SK-N-SH (cell line): ENCODE measurements at regions of chr5 and their contacts with region 1.

Region 1: DNA sequence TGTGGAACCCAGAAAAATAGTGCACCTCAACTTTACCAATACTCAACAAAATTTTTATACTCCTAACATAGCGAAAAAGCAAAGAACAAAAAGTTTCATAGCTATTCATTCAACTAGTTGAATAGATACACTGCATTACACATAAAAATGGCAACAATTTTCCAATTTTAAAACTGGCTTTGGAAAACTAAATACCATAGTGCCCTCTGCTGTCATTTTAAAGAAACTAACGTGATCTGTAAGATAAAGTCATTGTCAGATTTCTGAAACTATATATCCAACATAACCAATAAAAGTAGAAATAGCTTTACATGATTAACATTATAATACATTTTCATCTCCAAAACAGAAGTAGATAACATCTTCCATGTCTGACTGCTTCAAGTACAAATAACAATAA is 31.6 kb downstream of the DTWD2 start:
- DNase-seq: peak; percentile 34
- H3K4me3 ChIP-seq: no peak overlapping the region
- H3K27ac ChIP-seq: no peak overlapping the region
- H3K4me1 ChIP-seq: no peaks in the 10 kb centered on the region; a peak in 1 of 4 replicates
- H3K27me3 ChIP-seq: no peaks in the 10 kb centered on the region
- CTCF ChIP-seq: peak; percentile 66
- EP300 ChIP-seq: no peak
- RAD21 ChIP-seq: peak; percentile 77

Region 2: GRCh38 chr5:118791926-118792734 is 164.6 kb before region 1 on chr5:
- CTCF ChIA-PET with region 1: interaction called, 13 read pairs
- POLR2A ChIA-PET with region 1: no interaction called
- DNase-seq: peak; percentile 46
- H3K4me3 ChIP-seq: peak overlapping the region in 1 of 2 experiments; percentile 47; a peak in 1 of 4 replicates
- H3K27ac ChIP-seq: no peak overlapping the region
- H3K4me1 ChIP-seq: peaks cover 4 to 5% of the 10 kb centered on the region in 2 experiments; a peak in 3 of 4 replicates
- H3K27me3 ChIP-seq: no peaks in the 10 kb centered on the region
- CTCF ChIP-seq: peak; percentile 83
- EP300 ChIP-seq: no peak
- RAD21 ChIP-seq: peak; percentile 87

Region 3: DNA sequence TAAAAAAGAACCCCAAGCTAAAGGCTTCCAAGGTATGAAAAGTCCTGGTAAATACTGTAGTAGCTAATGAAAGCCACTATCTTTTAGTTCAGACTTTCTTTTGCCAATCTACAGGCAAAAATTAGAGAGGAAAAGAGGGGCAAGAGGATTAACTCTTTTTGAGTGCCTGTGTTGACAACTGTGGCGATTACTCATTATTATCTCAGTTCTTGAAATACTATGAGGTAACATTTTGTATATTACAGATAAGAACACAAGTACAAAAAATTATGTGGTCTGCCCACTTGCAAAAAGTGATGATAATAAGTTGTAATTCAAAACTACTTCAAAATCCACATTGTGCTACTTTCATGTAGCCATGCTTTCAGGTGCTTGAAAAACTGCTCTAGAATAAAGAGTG is 112.4 kb before region 1 on chr5:
- CTCF ChIA-PET with region 1: no interaction called
- POLR2A ChIA-PET with region 1: no interaction called
- DNase-seq: no peak
- H3K4me3 ChIP-seq: no peak overlapping the region
- H3K27ac ChIP-seq: no peak overlapping the region
- H3K4me1 ChIP-seq: no peaks in the 10 kb centered on the region
- H3K27me3 ChIP-seq: no peaks in the 10 kb centered on the region
- CTCF ChIP-seq: no peak
- EP300 ChIP-seq: no peak
- RAD21 ChIP-seq: no peak

Region 4: DNA sequence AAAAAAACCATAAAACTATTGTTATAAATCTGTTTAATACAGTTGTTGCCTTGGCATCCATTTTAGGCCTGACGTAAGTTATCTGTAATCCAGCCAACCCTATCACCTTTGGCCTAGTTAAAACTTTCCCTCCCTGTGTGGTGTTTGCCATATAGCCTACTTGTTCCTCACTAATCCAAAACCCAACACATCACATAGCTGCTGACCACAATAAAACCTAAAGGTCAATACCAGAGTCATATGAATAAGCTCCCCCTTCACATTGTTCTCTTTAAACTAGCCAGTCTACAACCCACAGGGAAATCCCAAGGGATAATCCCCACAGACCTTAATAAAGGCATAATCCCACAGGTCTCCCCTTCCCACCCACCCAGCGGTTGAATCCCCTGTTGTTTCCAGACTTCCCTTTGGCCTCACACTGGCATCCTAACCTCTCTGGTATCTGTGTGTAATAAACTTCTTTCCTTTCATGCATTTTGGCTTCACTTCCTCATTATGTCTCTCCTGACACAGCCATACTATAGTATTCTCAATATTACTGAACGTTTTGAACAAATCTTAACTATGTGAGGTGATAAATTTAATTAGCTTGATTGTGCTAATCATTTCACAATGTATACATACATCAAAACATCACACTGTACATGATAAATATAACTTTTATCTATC is 19.2 kb before region 1 on chr5:
- CTCF ChIA-PET with region 1: interaction called, 22 read pairs
- POLR2A ChIA-PET with region 1: no interaction called
- DNase-seq: no peak
- H3K4me3 ChIP-seq: no peak overlapping the region
- H3K27ac ChIP-seq: no peak overlapping the region
- H3K4me1 ChIP-seq: no peaks in the 10 kb centered on the region
- H3K27me3 ChIP-seq: no peaks in the 10 kb centered on the region
- CTCF ChIP-seq: no peak
- EP300 ChIP-seq: no peak
- RAD21 ChIP-seq: no peak

Region 5: DNA sequence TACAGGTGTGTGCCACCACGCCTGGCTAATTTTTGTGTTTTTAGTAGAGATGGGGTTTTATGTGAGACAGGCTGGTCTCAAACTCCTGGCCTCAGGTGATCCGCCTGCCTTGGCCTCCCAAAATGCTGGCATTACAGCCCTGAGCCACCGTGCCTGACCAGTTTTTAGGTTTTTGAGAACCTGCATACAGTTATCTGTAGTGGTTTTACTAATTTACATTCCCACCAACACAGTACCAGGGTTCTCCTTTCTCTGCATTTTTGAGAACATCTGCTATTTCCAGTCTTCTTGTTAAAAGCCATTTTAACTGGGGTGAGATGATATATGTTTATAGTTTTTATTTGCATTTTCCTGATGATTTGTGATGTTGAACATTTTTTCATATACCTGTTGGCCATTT is 127.0 kb after region 1 on chr5:
- CTCF ChIA-PET with region 1: no interaction called
- POLR2A ChIA-PET with region 1: no interaction called
- DNase-seq: no peak
- H3K4me3 ChIP-seq: no peak overlapping the region
- H3K27ac ChIP-seq: no peak overlapping the region
- H3K4me1 ChIP-seq: peaks cover 5 to 9% of the 10 kb centered on the region in 2 experiments; a peak in 3 of 4 replicates
- H3K27me3 ChIP-seq: no peaks in the 10 kb centered on the region
- CTCF ChIP-seq: no peak
- EP300 ChIP-seq: no peak
- RAD21 ChIP-seq: no peak